Posterior vena cava (tissue), 2 donors: ENCODE measurements at regions of chr7 and their contacts with region 1.

Region 1: DNA sequence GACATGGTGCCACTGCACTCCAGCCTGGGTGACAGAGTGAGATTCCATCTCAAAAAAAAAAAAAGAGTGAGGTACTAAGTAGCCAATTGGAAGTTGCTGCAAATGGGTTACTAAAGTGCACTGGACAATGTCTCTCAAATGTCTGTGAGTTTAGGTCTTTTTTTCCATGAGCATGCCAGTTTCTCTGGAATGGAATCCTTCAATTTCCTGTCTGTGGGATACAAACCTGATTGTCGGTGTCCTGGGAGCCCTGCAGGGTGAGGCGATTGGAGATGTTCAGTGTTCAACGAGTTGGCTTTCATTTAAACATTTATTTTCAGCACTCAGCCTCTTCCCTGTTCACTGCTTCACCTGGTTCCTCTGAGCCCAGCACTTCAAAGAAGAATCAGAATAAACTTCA is 5.3 kb upstream of the CALD1 start:
- DNase-seq: no peak

Region 2: DNA sequence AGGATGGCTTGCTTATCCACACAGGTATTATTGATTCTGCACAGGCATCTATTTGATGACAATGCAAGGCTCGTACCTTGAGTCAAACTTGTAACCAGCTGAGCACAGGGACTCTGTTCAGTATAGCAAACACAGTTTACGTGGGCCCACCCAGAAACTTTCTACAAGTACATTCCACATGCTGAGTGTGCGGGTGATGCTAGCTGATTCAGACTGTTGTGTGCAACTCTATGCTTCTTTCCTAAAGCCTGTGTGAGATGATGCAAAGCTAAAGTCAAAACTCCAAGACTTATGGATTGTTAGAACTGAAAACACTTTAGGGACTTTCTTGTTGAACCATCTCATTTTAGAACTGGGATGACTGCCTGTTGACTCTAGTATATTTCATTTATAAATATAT is 16.2 kb before region 1 on chr7:
- intact Hi-C with region 1: loop called in 1 of 2 experiments (anchors 2 kb)
- DNase-seq: no peak